SK-N-SH (cell line): ENCODE measurements at regions of chr2 and their contacts with region 1.

Region 1: GRCh38 chr2:175167792-175168563 is at the start of gene ATF2:
- DNase-seq: peak; percentile 93
- H3K4me3 ChIP-seq: peak within 1 kb of the TSS; percentile 96 to 98
- H3K27ac ChIP-seq: peak within 1 kb of the TSS; percentile 94 to 98
- H3K4me1 ChIP-seq: no peaks in the 10 kb centered on the region; a peak in 3 of 4 replicates
- H3K27me3 ChIP-seq: no peaks in the 10 kb centered on the region
- CTCF ChIP-seq: no peak
- EP300 ChIP-seq: no peak
- RAD21 ChIP-seq: no peak
- polyA plus RNA-seq, gene ATF2: 19.0 and 25.7 TPM in 2 replicates

Region 2: GRCh38 chr2:175181104-175181876 is 13.3 kb after region 1 on chr2 and contains the start of gene ATP5MC3:
- CTCF ChIA-PET with region 1: interaction called, 5 read pairs
- POLR2A ChIA-PET with region 1: interaction called, 10 read pairs
- DNase-seq: peak; percentile 94
- H3K4me3 ChIP-seq: peak within 1 kb of the TSS; percentile 84 to 98
- H3K27ac ChIP-seq: peak within 1 kb of the TSS; percentile 70 to 85; a peak in 3 of 4 replicates
- H3K4me1 ChIP-seq: peaks cover 4 to 7% of the 10 kb centered on the region in 2 experiments; a peak in 3 of 4 replicates
- H3K27me3 ChIP-seq: no peaks in the 10 kb centered on the region
- CTCF ChIP-seq: peak; percentile 41
- EP300 ChIP-seq: no peak
- RAD21 ChIP-seq: no peak
- polyA plus RNA-seq, gene ATP5MC3: 365 and 408 TPM in 2 replicates

Region 3: DNA sequence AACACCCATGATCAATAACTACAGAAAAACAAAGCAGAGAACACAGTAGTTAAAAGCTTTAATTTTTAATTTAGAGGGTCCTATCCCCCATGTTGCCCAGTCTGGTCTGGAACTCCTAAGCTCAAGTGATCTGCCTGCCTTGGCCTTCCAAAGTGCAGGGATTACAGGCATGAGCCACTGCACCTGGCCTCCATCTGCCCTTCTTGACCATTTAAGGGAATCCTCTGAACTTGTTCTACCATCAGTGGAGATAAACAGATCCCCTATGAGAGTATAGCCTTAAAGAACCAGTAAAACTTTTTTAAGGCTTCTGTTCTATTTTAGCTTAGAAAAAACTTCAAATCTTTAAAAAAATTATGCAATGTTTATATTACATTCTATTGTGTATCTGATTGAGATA is 27.0 kb after region 1 on chr2:
- CTCF ChIA-PET with region 1: no interaction called
- POLR2A ChIA-PET with region 1: no interaction called
- DNase-seq: no peak
- H3K4me3 ChIP-seq: no peak overlapping the region
- H3K27ac ChIP-seq: no peak overlapping the region
- H3K4me1 ChIP-seq: no peaks in the 10 kb centered on the region
- H3K27me3 ChIP-seq: no peaks in the 10 kb centered on the region
- CTCF ChIP-seq: no peak
- EP300 ChIP-seq: no peak
- RAD21 ChIP-seq: no peak